ENCODE measurements at regions of chr16 and their contacts with region 1.

Region 1: DNA sequence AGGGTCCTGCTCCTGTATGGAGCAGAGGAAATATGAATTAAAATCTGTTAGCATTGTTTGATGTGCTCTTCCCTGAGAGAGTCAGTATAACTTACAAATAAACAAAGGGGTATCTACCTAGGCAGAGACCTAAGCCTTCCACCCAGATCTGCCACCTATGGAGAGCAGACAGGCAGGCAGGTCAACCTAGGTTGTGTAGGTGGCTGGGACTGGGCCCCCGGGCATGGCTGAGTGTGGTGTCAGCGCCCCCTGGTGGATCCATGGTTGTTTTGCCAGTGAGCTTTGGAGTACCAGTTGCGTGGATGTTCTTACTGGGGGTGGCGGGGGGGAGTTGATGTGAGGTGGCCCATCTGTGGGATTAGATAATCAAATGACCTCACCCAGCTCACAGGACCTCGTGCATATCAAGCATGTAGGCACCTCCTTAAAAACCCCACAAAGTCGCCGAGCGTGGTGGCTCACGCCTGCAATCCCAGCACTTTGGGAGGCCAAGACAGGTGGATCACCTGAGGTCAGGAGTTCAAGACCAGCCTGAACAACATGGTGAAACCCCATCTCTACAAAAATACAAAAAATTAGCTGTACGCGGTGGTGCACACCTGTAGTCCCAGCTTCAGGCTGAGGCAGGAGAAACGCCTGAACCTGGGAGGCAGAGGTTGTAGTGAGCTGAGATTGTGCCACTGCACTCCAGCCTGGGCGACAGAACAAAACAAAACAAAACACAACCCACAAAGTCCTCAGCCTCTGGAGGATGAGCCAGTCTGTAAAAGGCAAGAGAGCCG is 17.6 kb downstream of the DUS2 start:
- DNase-seq: peak; percentile 78 to 97
- H3K4me3 ChIP-seq: no peak overlapping the region
- CTCF ChIP-seq: peak in 1 of 3 donors; percentile 72
- POLR2A ChIP-seq: no peak

Region 2: DNA sequence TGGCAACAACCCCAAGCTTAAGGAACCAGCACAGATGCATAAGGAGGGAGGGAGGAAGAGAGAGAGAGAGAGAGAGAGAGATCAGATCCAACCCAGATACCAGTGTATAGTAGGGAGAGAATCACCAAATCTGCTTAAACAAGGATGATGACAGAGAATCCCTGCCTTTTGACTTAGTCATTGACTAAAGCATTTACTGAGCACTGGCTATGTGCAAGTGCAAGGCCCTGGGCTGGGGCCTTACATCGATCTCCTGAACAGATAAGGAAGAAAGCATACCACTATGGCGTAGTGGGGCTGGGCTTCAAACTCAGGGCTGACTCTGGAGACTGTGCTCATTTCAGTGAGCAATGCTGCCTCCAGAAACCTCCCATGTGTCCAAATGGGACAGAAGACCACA is 218.2 kb before region 1 on chr16:
- intact Hi-C with region 1: loop called (anchors 10 kb)
- DNase-seq: no peak
- H3K4me3 ChIP-seq: no peak overlapping the region
- CTCF ChIP-seq: no peak
- POLR2A ChIP-seq: no peak

Region 3: GRCh38 chr16:67959520-67959919 is 81.2 kb before region 1 on chr16:
- intact Hi-C with region 1: no loop called
- DNase-seq: peak in 1 of 2 donors; percentile 68
- H3K4me3 ChIP-seq: no peak overlapping the region
- CTCF ChIP-seq: no peak
- POLR2A ChIP-seq: no peak

Region 4: GRCh38 chr16:67993189-67994039 is 47.3 kb before region 1 on chr16:
- intact Hi-C with region 1: loop called (anchors 5 kb)
- DNase-seq: peak; percentile 54 to 94
- H3K4me3 ChIP-seq: no peak overlapping the region
- CTCF ChIP-seq: peak in 2 of 3 donors; percentile 94 to 99
- POLR2A ChIP-seq: no peak